ENCODE measurements at regions of chr18 and their contacts with region 1.

Region 1: DNA sequence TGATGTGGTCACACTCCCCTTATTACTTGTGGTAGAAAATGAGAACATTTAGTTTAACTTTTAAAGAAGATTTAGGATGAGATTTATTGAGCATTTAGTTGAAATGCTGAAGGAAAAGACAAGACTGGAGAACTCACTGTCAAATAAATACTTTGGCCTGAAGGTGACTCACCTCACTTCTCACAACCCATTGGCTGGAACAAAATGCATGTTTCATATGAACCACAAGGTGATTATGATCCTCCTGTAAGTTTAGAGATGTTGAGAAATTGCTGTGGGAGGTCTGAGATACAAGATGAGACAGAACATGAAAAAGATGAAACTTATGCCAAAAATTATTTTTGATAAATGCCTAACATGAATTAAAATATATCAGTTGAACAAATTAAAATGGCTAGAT is 1004.5 kb downstream of the SOCS6 start:
- DNase-seq: no peak
- H3K4me3 ChIP-seq: no peak overlapping the region
- H3K27ac ChIP-seq: no peak overlapping the region
- H3K4me1 ChIP-seq: no peaks in the 10 kb centered on the region
- H3K27me3 ChIP-seq: no peaks in the 10 kb centered on the region
- CTCF ChIP-seq: no peak

Region 2: DNA sequence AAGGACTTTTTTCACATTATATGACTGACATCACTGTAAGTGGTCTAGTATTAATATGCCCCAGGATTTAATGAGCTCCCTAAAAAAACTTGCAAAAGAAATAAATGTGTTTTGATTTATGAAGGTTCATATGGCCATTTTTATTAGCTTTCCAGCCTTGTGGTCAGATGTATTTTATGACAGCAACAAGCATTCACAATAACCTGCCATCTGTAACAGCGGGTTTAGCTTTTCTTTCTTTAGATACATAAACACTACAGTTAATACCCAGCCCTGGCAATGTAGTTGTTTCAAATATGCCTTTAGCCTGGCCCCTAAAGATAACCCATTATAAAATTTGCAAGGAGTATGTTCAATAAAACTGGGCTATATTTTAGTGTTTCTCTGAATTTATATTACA is 59.3 kb after region 1 on chr18:
- intact Hi-C with region 1: loop called (anchors 2 kb)
- DNase-seq: no peak
- H3K4me3 ChIP-seq: no peak overlapping the region
- H3K27ac ChIP-seq: no peak overlapping the region
- H3K4me1 ChIP-seq: no peaks in the 10 kb centered on the region
- H3K27me3 ChIP-seq: no peaks in the 10 kb centered on the region
- CTCF ChIP-seq: no peak

Region 3: GRCh38 chr18:71630686-71631085 is 337.4 kb after region 1 on chr18:
- intact Hi-C with region 1: no loop called
- DNase-seq: no peak
- H3K4me3 ChIP-seq: no peak overlapping the region
- H3K27ac ChIP-seq: no peak overlapping the region
- H3K4me1 ChIP-seq: no peaks in the 10 kb centered on the region
- H3K27me3 ChIP-seq: no peaks in the 10 kb centered on the region
- CTCF ChIP-seq: no peak